ENCODE measurements at regions of chr1 and their contacts with region 1.

Region 1: GRCh38 chr1:9196129-9197040 is 38.2 kb upstream of the H6PD start:
- DNase-seq: peak; percentile 63
- H3K4me3 ChIP-seq: peak overlapping the region; percentile 34
- H3K27ac ChIP-seq: peak overlapping the region; percentile 57
- H3K4me1 ChIP-seq: peaks cover 51% of the 10 kb centered on the region
- H3K27me3 ChIP-seq: peaks cover 42% of the 10 kb centered on the region
- CTCF ChIP-seq: peak; percentile 91

Region 2: DNA sequence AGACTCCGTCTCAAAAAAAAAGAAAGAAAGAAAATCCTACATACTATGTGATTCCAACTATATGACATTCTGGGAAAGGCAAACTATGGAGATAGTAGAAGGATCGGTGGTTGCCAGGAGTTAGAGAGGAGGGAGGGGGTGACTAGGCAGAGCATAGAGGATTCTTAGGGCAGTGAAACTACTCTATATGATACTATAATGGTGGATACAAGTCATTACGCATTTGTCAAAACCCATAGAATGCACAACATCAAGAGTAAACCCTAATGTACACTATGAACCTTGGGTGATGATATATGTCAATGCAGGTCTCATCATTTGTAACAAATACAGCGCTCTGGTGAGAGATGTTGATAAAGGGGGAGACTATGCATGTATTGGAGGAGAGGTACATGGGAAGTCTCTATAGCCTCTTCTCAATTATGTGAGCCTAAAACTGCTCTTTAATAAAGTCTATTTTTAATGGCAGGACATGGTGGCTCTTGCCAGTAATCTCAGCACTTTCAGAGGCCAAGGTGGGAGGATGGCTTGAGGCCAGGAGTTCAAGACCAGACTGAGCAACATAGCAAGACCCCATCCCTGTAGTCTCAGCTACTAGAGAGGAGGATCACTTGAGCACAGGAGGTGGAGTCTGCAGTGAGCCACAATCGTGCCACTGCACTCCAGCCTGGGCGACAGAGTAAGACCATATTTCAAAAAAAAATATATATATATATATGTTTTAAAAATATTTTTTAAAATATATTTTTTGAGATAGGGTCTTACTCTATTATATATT is 143.9 kb before region 1 on chr1:
- intact Hi-C with region 1: no loop called
- DNase-seq: no peak
- H3K4me3 ChIP-seq: no peak overlapping the region
- H3K27ac ChIP-seq: no peak overlapping the region
- H3K4me1 ChIP-seq: peaks cover 11% of the 10 kb centered on the region
- H3K27me3 ChIP-seq: no peaks in the 10 kb centered on the region
- CTCF ChIP-seq: no peak

Region 3: DNA sequence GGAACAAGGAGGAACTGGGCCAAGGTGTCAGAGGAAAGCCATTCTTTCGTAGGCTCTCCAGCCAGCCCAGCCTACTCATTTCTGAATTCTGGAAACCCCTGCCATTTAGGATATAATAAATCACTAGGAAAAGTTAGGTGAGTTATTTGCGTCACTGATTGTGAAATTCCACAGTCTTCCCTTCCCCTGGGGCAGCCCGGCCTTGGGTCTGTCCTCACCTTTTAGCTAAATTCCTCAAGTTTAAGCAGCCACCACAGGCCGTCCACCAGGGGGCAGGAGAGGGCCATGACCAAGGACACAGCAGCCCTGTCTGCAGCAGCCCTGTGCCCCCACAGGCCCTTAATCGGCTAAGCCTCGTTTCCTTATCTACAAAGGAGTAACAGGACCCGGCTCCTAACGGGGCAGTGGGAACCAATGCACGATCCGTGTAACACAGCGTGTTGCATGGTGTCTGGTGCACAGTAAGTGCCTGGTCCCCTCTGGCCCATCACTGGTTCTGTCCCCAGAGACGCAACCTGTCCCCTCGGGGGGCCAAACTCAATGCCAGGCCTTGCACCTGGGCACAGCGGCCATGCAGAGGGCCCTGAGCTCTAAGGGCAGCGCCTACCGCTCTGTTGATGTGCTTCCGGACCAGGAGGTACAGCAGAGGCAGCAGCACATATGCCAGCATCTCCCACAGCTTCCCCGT is 85.6 kb before region 1 on chr1:
- intact Hi-C with region 1: loop called (anchors 10 kb)
- DNase-seq: peak; percentile 88
- H3K4me3 ChIP-seq: no peak overlapping the region
- H3K27ac ChIP-seq: no peak overlapping the region
- H3K4me1 ChIP-seq: peaks cover 30% of the 10 kb centered on the region
- H3K27me3 ChIP-seq: no peaks in the 10 kb centered on the region
- CTCF ChIP-seq: peak; percentile 95

Region 4: GRCh38 chr1:9143250-9143649 is 53.1 kb before region 1 on chr1:
- intact Hi-C with region 1: loop called (anchors 2 kb)
- DNase-seq: no peak
- H3K4me3 ChIP-seq: no peak overlapping the region
- H3K27ac ChIP-seq: no peak overlapping the region
- H3K4me1 ChIP-seq: no peaks in the 10 kb centered on the region
- H3K27me3 ChIP-seq: no peaks in the 10 kb centered on the region
- CTCF ChIP-seq: no peak

Measured in left ventricle myocardium inferior (tissue), 1 donor.